ENCODE measurements at regions of chr7 and their contacts with region 1.

Region 1: GRCh38 chr7:35588647-35589046 is 106.3 kb downstream of the HERPUD2 start:
- DNase-seq: no peak
- H3K4me3 ChIP-seq: no peak overlapping the region
- H3K27ac ChIP-seq: no peak overlapping the region
- H3K4me1 ChIP-seq: no peaks in the 10 kb centered on the region
- H3K27me3 ChIP-seq: no peaks in the 10 kb centered on the region
- CTCF ChIP-seq: no peak

Region 2: DNA sequence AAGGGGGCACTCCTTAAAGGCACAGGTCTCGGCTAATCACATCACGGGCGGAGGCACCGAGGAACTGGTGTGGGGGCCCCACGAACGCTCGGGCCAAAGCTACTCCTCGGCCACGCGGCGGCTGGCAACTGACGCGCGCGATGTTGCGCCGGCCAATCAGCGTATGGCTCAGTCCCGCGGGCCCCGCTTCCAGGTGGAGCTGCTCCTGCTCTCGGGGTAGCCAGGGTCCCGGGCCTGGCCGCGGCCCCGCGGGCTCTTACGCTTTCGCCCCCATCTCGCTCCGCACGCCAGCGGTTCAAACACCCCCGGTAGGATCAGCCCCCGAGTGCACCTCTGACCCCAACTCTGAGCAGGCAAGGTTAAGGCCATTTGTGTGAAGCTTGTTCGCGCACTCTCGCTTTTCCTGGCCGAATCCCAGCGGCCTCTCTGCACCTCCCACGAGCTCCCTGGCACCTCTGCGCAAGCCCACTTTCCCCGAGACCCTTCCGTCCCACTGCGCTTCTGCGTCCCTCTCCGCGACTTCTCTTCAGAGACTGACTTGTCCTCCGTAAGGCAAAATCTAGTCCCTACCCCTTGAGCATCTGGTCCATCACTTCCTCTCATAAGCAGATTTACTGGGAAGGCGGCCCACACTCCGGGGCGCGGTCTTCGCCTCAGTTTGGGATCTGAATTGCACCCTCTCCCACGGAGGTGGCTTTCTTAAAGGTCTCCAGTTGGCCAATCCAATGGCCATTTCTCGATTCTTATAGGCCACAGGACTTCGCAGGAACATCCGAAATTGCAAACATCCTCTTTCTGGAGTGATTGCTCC is 133.9 kb before region 1 on chr7:
- CTCF ChIA-PET with region 1: no interaction called
- POLR2A ChIA-PET with region 1: no interaction called
- intact Hi-C with region 1: no loop called
- DNase-seq: no peak
- H3K4me3 ChIP-seq: no peak overlapping the region
- H3K27ac ChIP-seq: no peak overlapping the region
- H3K4me1 ChIP-seq: peaks cover 16% of the 10 kb centered on the region
- H3K27me3 ChIP-seq: no peaks in the 10 kb centered on the region
- CTCF ChIP-seq: no peak

Region 3: GRCh38 chr7:35599645-35600044 is 11.0 kb after region 1 on chr7:
- CTCF ChIA-PET with region 1: interaction called, 3 read pairs
- POLR2A ChIA-PET with region 1: interaction called, 11 read pairs
- intact Hi-C with region 1: no loop called
- DNase-seq: no peak
- H3K4me3 ChIP-seq: no peak overlapping the region
- H3K27ac ChIP-seq: no peak overlapping the region
- H3K4me1 ChIP-seq: peaks cover 30% of the 10 kb centered on the region
- H3K27me3 ChIP-seq: no peaks in the 10 kb centered on the region
- CTCF ChIP-seq: no peak

Region 4: DNA sequence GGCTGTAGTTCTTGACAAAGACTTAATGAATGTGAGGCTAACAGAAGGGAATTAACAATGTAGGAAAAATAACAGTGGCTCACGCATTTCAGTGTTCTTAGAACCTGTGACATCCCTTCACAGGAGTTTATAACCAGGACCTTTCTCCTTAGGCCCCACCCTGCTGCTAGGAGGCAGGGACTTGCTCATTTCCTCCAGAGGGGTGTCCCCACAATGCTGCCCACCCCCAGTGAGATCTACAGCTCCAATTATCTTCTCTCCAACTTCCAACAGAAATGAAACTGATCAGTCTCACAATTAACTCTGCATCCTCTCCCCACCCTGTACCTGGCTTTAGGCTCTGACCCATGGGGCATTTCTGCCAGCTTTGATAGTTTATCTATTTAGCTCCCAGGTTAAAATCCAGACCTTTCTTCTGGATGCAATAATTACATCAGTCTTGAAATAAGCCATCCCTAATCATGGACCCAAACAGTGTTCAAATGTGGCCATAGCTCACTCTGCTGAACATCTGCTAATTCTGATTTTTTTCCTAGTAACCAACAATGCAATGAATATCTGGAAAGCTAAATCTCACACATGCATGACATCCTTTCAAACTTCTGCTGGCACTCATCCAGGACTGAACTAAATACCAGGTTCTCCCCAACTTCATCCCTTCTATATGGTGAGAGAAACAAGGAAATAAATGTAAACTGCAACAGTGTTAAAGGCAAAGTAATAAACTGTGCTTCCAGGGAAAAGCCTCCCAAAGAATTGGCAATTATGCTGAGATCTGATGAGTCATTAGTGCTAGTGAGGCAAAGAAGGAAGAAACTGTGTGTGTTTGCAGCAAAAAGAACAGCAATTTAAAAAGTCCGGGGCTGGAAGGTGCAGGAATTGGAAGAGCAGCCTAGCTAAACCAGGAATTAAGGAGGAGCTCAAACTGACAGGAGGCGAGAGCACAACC is 41.7 kb after region 1 on chr7:
- CTCF ChIA-PET with region 1: no interaction called
- POLR2A ChIA-PET with region 1: no interaction called
- intact Hi-C with region 1: no loop called
- DNase-seq: peak; percentile 60
- H3K4me3 ChIP-seq: no peak overlapping the region
- H3K27ac ChIP-seq: no peak overlapping the region
- H3K4me1 ChIP-seq: peaks cover 15% of the 10 kb centered on the region
- H3K27me3 ChIP-seq: no peaks in the 10 kb centered on the region
- CTCF ChIP-seq: no peak

Measured in A673 (cell line).